ENCODE measurements at regions of chr1 and their contacts with region 1.

Region 1: GRCh38 chr1:89085781-89086180 is 20.8 kb upstream of the GBP1 start:
- DNase-seq: no peak
- ATAC-seq: peak in 1 of 2 donors; percentile 64
- H3K4me3 ChIP-seq: no peak overlapping the region
- H3K27ac ChIP-seq: no peak overlapping the region
- H3K4me1 ChIP-seq: no peaks in the 10 kb centered on the region
- H3K27me3 ChIP-seq: no peaks in the 10 kb centered on the region
- CTCF ChIP-seq: peak in 4 of 5 experiments; percentile 32 to 67 (median 36)
- POLR2A ChIP-seq: no peak

Region 2: GRCh38 chr1:88847643-88848042 is 238.1 kb before region 1 on chr1:
- in situ Hi-C with region 1: no loop called
- intact Hi-C with region 1: no loop called
- DNase-seq: no peak
- ATAC-seq: no peak
- H3K4me3 ChIP-seq: no peak overlapping the region
- H3K27ac ChIP-seq: no peak overlapping the region
- H3K4me1 ChIP-seq: no peaks in the 10 kb centered on the region
- H3K27me3 ChIP-seq: no peaks in the 10 kb centered on the region
- CTCF ChIP-seq: no peak
- POLR2A ChIP-seq: no peak

Region 3: GRCh38 chr1:89151047-89151446 is 65.3 kb after region 1 on chr1:
- in situ Hi-C with region 1: loop called in 1 of 4 experiments (anchors 10 kb)
- intact Hi-C with region 1: no loop called
- DNase-seq: no peak
- ATAC-seq: no peak
- H3K4me3 ChIP-seq: no peak overlapping the region
- H3K27ac ChIP-seq: no peak overlapping the region
- H3K4me1 ChIP-seq: no peaks in the 10 kb centered on the region
- H3K27me3 ChIP-seq: no peaks in the 10 kb centered on the region
- CTCF ChIP-seq: no peak
- POLR2A ChIP-seq: no peak

Region 4: DNA sequence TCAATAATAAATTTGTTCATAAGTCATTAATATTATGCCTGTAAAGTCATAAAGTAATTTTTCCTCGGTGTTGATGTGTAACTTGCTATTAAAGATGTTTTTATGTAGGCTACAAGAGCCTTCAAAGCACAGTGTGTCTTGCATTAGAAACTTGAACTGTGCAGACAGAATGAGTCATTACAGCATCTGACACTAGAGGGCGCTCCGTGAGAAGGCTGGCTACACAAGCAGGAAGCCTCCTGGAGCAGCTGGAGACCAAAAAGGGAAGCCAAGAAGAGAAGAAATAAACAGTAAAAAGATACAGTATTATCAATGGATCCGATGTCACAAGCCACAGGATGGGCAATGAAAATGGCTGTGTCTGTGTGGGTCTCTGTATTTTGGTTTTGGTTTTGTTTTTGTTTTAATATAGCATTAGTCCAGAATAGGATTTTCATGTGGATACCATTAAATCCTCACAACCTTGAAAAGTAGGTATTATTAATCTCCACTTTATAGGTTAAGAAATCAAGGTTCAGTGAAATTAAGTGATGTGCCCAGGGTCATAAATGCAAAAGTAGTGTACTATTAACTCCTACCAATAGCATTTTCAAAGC is 719.0 kb after region 1 on chr1:
- in situ Hi-C with region 1: no loop called
- intact Hi-C with region 1: no loop called
- DNase-seq: peak; percentile 67 to 78
- ATAC-seq: peak; percentile 96 to 98
- H3K4me3 ChIP-seq: no peak overlapping the region
- H3K27ac ChIP-seq: no peak overlapping the region
- H3K4me1 ChIP-seq: no peaks in the 10 kb centered on the region
- H3K27me3 ChIP-seq: no peaks in the 10 kb centered on the region
- CTCF ChIP-seq: peak; percentile 75 to 93 (median 82)
- POLR2A ChIP-seq: no peak